Pancreas (tissue), 10 donors: ENCODE measurements at regions of chr20 and their contacts with region 1.

Region 1: DNA sequence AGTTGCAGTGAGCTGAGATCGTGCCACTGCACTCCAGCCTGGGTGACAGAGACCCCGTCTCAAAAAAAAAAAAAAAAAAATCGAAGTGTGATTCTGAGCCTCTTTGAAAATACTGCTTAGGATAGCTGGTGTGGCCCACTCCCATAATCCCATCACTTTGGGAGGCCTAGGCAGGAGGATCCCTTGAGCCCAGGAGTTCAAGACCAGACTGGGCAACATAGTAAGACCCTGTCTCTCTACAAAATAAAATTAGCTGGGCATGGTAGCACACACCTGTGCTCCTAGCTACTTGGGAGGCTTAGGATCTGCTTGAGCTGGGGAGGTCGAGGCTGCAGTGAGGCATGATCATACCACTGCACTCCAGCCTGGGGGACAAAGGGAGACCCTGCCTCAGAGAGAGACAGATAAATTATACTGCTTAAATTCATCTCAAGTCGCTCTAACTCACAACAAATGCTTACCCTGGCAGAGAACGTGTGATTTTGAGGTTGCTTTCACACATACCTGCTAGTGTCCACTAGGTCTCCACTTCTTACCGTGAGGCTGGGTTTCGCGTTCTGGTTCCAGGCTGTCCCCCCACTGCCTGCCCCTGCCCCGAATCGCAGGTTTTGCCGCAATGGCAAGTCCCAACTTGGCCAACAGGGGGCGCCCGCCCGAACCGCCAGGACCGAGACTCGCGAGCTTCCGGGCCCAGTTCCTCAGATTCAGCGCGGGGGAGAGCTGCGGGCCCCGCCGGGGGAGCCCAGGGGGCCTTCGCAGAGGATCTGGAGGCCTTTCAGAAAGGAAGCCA is 12.3 kb upstream of the TMC2 start:
- DNase-seq: peak; percentile 77 to 98 (median 86)
- ATAC-seq: peak; percentile 77 to 91 (median 88)
- H3K4me3 ChIP-seq: peak overlapping the region; percentile 58 to 81 (median 74)
- H3K27ac ChIP-seq: peak overlapping the region; percentile 36 to 88 (median 66)
- H3K4me1 ChIP-seq: peaks cover 0 to 6% (median 0%) of the 10 kb centered on the region in 3 donors
- H3K27me3 ChIP-seq: no peaks in the 10 kb centered on the region
- CTCF ChIP-seq: peak; percentile 92 to 98 (median 96)

Region 2: DNA sequence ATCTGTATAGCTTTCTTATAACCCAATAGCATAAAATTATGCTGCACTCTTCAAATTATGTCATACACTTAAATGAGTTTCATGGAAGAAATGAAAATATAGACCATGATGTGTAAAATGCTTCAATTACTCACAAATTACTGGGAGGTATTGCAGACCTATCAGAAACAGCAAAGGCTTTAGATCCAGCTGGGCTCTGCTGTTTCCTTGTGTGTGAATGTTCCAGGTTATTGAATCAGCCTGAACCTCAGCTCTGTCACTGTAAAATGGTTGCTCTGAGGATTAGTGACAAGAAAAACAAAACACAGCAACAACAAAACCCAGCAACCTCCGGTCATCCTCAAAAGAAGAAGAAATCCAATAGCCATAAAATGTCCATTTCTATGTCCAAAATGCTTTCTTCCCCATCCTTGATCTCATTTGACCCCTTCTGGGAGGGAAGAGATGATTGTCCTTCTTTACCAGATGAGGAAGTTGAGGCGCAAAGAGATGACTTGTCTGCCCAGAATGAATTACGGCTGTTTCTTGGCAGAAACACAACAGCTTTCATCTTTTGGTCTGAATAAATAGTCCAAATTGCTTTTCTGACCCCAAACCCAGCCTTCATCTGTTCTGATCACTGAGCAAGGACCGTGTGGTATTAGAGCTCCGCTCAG is 185.6 kb before region 1 on chr20:
- intact Hi-C with region 1: no loop called
- DNase-seq: no peak
- ATAC-seq: no peak
- H3K4me3 ChIP-seq: no peak overlapping the region
- H3K27ac ChIP-seq: no peak overlapping the region
- H3K4me1 ChIP-seq: no peaks in the 10 kb centered on the region
- H3K27me3 ChIP-seq: no peaks in the 10 kb centered on the region
- CTCF ChIP-seq: no peak

Region 3: DNA sequence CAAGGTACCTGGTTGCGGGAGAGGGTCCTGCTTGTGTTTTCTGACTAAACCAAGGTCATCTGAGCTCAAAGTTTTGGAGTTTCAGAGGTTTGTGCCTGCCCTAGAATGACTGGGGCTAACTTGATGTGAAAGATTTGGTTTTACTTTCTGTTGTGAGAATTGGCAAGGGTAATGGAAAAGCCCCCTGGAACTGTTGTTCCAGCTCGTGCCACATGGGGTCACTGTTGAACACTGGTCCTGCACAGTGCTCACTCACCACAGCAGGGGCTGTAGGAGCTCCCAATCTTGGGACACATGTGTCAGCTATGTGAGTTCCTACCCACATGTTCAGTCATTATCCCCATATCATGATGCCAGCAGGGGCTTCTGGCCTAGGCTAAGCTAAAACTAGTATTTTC is 136.9 kb before region 1 on chr20:
- intact Hi-C with region 1: no loop called
- DNase-seq: no peak
- ATAC-seq: peak in 1 of 4 donors; percentile 29
- H3K4me3 ChIP-seq: no peak overlapping the region
- H3K27ac ChIP-seq: no peak overlapping the region
- H3K4me1 ChIP-seq: no peaks in the 10 kb centered on the region
- H3K27me3 ChIP-seq: no peaks in the 10 kb centered on the region
- CTCF ChIP-seq: peak in 1 of 4 donors; percentile 14

Region 4: GRCh38 chr20:2643708-2644107 is 119.6 kb after region 1 on chr20:
- intact Hi-C with region 1: loop called in 2 of 3 experiments (anchors 5 to 10 kb)
- DNase-seq: no peak
- ATAC-seq: no peak
- H3K4me3 ChIP-seq: no peak overlapping the region
- H3K27ac ChIP-seq: no peak overlapping the region
- H3K4me1 ChIP-seq: no peaks in the 10 kb centered on the region
- H3K27me3 ChIP-seq: no peaks in the 10 kb centered on the region
- CTCF ChIP-seq: no peak

Region 5: DNA sequence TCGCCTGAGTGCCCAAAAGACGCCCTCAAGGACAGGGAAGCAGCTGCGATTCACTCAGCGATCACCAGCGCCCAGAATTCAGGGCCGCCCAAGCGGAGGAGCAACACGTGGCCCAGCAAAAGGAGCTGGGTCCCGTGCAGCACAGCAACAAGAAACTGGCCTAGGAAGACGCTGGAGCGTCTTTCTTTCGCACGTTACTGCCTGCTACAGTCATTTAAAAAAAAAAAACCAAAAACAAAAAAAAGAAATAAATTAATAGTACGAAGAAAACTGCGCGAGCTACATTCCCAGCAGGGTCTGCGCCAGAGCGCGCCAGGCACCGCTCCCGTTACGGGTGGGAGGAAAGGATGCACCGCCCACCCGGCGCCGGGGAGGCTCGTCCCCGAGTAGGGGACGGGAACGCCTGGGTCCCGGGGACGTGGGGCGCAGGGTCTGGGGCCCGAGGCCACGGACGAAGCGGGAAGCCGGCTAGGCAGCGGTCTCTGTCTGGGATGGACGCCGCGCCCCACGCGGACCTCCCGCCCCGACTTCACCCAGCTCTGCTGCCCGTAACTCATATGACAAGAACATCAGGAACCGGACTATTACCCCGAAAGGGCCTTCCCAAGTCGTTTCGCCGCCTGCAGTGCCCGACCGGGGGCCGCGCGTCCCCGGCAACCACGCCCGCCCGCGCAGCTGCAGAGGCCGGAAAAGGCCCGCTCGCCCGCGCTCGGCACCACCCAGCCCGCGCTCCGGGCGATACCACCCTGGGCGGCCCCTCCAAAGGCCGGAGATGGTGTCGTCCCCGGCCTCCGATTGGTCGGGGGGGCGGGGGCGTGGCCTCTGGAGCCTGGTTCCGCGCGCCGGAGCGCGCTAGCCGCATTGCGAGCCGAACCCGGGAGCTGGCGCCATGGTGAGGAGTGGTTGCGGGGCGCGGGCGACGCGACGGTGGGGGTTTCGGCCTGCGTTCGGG is 127.9 kb after region 1 on chr20 and contains the start of gene NOP56:
- intact Hi-C with region 1: loop called in 2 of 3 experiments (anchors 5 to 10 kb)
- DNase-seq: peak; percentile 89 to 96 (median 94)
- ATAC-seq: peak; percentile 96 to 99 (median 96)
- H3K4me3 ChIP-seq: peak within 1 kb of the TSS; percentile 91 to 98 (median 96)
- H3K27ac ChIP-seq: peak within 1 kb of the TSS; percentile 78 to 91 (median 80)
- H3K4me1 ChIP-seq: peaks cover 5 to 16% (median 7%) of the 10 kb centered on the region in 3 donors
- H3K27me3 ChIP-seq: no peaks in the 10 kb centered on the region
- CTCF ChIP-seq: no peak
- total RNA-seq, gene NOP56: 36.2 to 83.1 (median 60.1) TPM